ENCODE measurements at regions of chr6 and their contacts with region 1.

Region 1: GRCh38 chr6:37381579-37381978 is 27.8 kb downstream of the RNF8 start:
- DNase-seq: peak; percentile 82 to 84
- H3K4me3 ChIP-seq: no peak overlapping the region
- H3K4me3 Mint-ChIP-seq: no peak overlapping the region
- H3K27ac Mint-ChIP-seq: peak overlapping the region; percentile 31
- H3K4me1 ChIP-seq: peaks cover 25% of the 10 kb centered on the region
- H3K4me1 Mint-ChIP-seq: peaks cover 16% of the 10 kb centered on the region
- H3K27me3 ChIP-seq: no peaks in the 10 kb centered on the region
- H3K27me3 Mint-ChIP-seq: no peaks in the 10 kb centered on the region
- CTCF ChIP-seq: peak; percentile 67 to 85

Region 2: DNA sequence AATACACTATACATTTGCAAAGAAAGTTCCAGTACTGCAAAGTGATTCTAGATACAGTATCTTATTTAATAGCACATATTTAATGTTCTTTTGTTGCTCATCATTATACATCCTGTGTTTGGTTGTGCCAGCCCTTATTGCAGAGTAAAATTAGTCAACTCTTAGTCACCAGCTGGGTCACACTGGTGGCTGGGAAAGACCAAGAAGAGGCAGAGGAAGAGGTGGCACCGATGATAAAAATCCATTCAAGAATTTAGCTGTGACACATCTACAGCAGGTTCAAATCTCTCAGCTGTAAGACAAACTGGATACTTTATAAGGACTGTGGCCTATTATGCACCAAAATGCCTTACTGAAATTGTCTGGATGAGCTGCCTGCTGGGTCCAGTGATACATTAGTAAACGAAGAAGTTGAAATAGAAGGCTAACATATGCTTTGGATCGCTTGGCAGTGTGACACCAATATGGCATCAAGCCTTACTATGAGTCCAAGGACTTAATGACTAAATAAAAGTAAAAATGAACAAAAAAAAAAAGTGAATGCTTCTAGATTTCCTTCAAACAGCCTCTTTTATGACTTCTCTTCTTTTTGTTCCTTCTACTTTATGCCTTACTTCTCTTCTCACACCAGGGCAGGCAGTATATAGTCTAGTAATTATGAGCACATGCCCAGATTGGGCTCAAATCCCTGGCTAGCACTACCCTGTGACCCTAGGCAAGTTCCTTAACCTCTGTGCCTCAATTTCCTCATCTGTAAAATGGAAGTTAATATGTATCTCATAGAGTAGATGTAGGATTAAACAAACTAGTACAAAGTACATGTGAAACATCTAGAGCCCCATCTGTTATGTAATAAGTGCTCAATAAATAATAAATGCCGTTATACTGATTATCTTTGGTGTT is 57.2 kb before region 1 on chr6:
- CTCF ChIA-PET with region 1: no interaction called
- POLR2A ChIA-PET with region 1: no interaction called
- intact Hi-C with region 1: loop called (anchors 1 kb)
- DNase-seq: no peak
- H3K4me3 ChIP-seq: no peak overlapping the region
- H3K4me3 Mint-ChIP-seq: no peak overlapping the region
- H3K27ac Mint-ChIP-seq: no peak overlapping the region
- H3K4me1 ChIP-seq: peaks cover 15% of the 10 kb centered on the region
- H3K4me1 Mint-ChIP-seq: peaks cover 13% of the 10 kb centered on the region
- H3K27me3 ChIP-seq: no peaks in the 10 kb centered on the region
- H3K27me3 Mint-ChIP-seq: no peaks in the 10 kb centered on the region
- CTCF ChIP-seq: no peak

Region 3: GRCh38 chr6:37432916-37433656 is 51.5 kb after region 1 on chr6 and contains the start of gene CMTR1:
- CTCF ChIA-PET with region 1: interaction called, 3 read pairs
- POLR2A ChIA-PET with region 1: no interaction called
- intact Hi-C with region 1: loop called (anchors 2 kb)
- DNase-seq: peak; percentile 93 to 96
- H3K4me3 ChIP-seq: peak within 1 kb of the TSS; percentile 75
- H3K4me3 Mint-ChIP-seq: peak within 1 kb of the TSS; percentile 73
- H3K27ac Mint-ChIP-seq: peak within 1 kb of the TSS; percentile 46
- H3K4me1 ChIP-seq: peaks cover 4% of the 10 kb centered on the region; the same call in 1 of the 2 replicates
- H3K4me1 Mint-ChIP-seq: peaks cover 17% of the 10 kb centered on the region
- H3K27me3 ChIP-seq: no peaks in the 10 kb centered on the region
- H3K27me3 Mint-ChIP-seq: no peaks in the 10 kb centered on the region
- CTCF ChIP-seq: no peak
- total RNA-seq, gene CMTR1: 40.0 and 40.8 TPM in 2 replicates

Region 4: DNA sequence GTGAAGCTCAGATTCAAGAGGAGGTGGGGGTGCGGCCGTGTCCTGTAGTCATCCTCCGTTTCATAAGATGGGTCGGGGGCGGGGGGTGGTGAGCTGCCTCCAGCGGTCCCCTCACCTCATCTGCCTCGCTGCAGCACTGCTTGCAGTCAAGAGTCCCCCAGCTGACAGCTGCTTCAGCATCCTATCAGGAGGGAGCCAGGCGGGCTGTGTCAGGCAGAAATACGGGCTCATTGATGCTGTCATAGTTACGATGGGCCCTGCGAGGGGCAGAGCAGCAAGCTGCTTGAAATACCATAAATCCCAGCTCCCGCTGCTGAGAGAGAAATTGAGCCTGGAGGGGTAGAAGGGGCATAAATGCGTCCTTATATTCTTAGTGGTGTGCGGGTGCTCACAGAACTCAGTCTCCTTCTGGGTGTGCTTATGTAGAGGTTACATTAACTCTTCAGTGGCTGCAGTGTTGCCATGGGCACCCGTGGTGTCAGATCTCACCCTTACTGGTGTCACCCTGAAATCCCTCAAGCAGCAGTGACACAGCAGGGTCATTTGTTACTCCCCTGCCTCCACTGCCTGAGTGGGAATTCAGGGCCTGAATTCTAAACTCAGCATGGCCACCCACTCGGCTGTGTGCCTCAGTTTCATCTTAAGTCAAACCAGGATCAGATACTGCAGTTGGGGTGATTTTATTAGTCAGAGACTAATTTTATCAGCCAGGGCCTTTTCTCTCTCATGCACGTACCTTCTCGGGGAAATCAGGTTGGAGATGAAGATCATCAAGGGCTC is 96.3 kb after region 1 on chr6:
- CTCF ChIA-PET with region 1: no interaction called
- POLR2A ChIA-PET with region 1: no interaction called
- intact Hi-C with region 1: loop called (anchors 5 kb)
- DNase-seq: no peak
- H3K4me3 ChIP-seq: no peak overlapping the region
- H3K4me3 Mint-ChIP-seq: no peak overlapping the region
- H3K27ac Mint-ChIP-seq: no peak overlapping the region
- H3K4me1 ChIP-seq: no peaks in the 10 kb centered on the region
- H3K4me1 Mint-ChIP-seq: no peaks in the 10 kb centered on the region
- H3K27me3 ChIP-seq: no peaks in the 10 kb centered on the region
- H3K27me3 Mint-ChIP-seq: no peaks in the 10 kb centered on the region
- CTCF ChIP-seq: no peak

Region 5: GRCh38 chr6:37499433-37500293 is 118.1 kb after region 1 on chr6 and contains the start of gene CCDC167:
- CTCF ChIA-PET with region 1: no interaction called
- POLR2A ChIA-PET with region 1: no interaction called
- intact Hi-C with region 1: no loop called
- DNase-seq: peak; percentile 96 to 98
- H3K4me3 ChIP-seq: peak within 1 kb of the TSS; percentile 61
- H3K4me3 Mint-ChIP-seq: peak within 1 kb of the TSS; percentile 89
- H3K27ac Mint-ChIP-seq: peak within 1 kb of the TSS; percentile 92
- H3K4me1 ChIP-seq: peaks cover 28% of the 10 kb centered on the region
- H3K4me1 Mint-ChIP-seq: peaks cover 16% of the 10 kb centered on the region
- H3K27me3 ChIP-seq: no peaks in the 10 kb centered on the region
- H3K27me3 Mint-ChIP-seq: no peaks in the 10 kb centered on the region
- CTCF ChIP-seq: no peak
- total RNA-seq, gene CCDC167: 30.6 and 32.3 TPM in 2 replicates

Measured in Caco-2 (cell line).